ENCODE measurements at regions of chr1 and their contacts with region 1.

Region 1: GRCh38 chr1:157369808-157370521 is 182.3 kb downstream of the FCRL5 start:
- DNase-seq: peak; percentile 50
- H3K4me3 ChIP-seq: no peak overlapping the region
- H3K27ac ChIP-seq: no peak overlapping the region
- H3K4me1 ChIP-seq: no peaks in the 10 kb centered on the region
- H3K27me3 ChIP-seq: no peaks in the 10 kb centered on the region
- CTCF ChIP-seq: peak; percentile 83 to 91

Region 2: GRCh38 chr1:157170677-157171515 is 199.1 kb before region 1 on chr1:
- CTCF ChIA-PET with region 1: interaction called, 3 read pairs
- dilution Hi-C with region 1: no loop called
- in situ Hi-C with region 1: loop called in 1 of 2 experiments (anchors 25 kb)
- intact Hi-C with region 1: loop called (anchors 5 kb)
- DNase-seq: peak; percentile 31
- H3K4me3 ChIP-seq: no peak overlapping the region
- H3K27ac ChIP-seq: no peak overlapping the region
- H3K4me1 ChIP-seq: no peaks in the 10 kb centered on the region
- H3K27me3 ChIP-seq: peaks cover 2% of the 10 kb centered on the region
- CTCF ChIP-seq: peak; percentile 42 to 55

Region 3: GRCh38 chr1:157407917-157408525 is 38.1 kb after region 1 on chr1:
- CTCF ChIA-PET with region 1: no interaction called
- dilution Hi-C with region 1: no loop called
- in situ Hi-C with region 1: no loop called
- intact Hi-C with region 1: no loop called
- DNase-seq: no peak
- H3K4me3 ChIP-seq: no peak overlapping the region
- H3K27ac ChIP-seq: no peak overlapping the region
- H3K4me1 ChIP-seq: no peaks in the 10 kb centered on the region
- H3K27me3 ChIP-seq: no peaks in the 10 kb centered on the region
- CTCF ChIP-seq: no peak

Measured in mammary epithelial cell (primary cell).